Transverse colon (tissue), 4 donors: ENCODE measurements at regions of chr12 and their contacts with region 1.

Region 1: DNA sequence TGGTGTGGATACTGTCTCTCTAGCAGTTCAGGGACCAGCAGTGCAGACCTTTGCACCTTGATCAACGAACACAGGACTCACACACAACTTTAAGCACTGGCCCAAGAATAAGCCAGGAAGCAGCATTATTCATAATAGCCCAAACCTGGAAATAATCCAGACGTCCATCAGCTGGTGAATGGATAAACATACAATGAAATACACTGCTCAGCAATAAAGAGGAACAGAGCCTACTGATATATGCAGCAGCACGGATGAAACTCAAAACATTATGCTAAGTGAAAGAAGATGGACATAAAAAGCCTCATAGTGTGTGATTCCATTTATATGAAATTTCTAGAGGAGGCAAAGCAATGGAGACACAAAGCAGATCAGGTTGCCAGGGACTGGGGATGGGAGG is 303.9 kb upstream of the FKBP4 start:
- DNase-seq: no peak
- H3K4me3 ChIP-seq: no peak overlapping the region
- H3K27ac ChIP-seq: peak overlapping the region in 1 of 4 donors; percentile 18
- H3K4me1 ChIP-seq: peaks cover 12 to 51% (median 29%) of the 10 kb centered on the region in 4 donors
- H3K27me3 ChIP-seq: no peaks in the 10 kb centered on the region
- CTCF ChIP-seq: no peak
- EP300 ChIP-seq: no peak
- POLR2A ChIP-seq: no peak

Region 2: DNA sequence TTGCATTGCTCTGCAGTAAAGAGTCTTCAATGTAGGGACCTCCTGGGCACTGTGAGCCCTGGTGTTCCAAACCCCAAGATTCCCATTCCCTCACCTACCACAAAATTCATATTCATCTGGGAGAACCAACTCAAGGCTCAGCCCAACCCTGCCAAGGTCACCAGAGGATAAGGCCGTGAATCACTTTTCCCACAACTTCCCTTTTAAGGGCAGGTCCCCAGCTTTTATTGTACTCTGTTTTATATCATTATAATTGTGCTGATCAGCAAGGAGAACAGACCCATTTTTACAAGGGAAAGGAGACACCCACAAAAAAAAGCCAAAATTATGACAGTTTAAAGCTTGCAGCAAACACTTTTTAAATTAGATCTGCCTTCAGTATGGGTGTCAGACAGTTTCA is 59.0 kb before region 1 on chr12:
- in situ Hi-C with region 1: no loop called
- intact Hi-C with region 1: loop called (anchors 2 kb)
- DNase-seq: peak; percentile 29
- H3K4me3 ChIP-seq: no peak overlapping the region
- H3K27ac ChIP-seq: peak overlapping the region; percentile 60 to 83 (median 72)
- H3K4me1 ChIP-seq: peaks cover 0 to 19% (median 3%) of the 10 kb centered on the region in 4 donors
- H3K27me3 ChIP-seq: no peaks in the 10 kb centered on the region
- CTCF ChIP-seq: no peak
- EP300 ChIP-seq: peak; percentile 82
- POLR2A ChIP-seq: no peak